ENCODE measurements at regions of chr10 and their contacts with region 1.

Region 1: GRCh38 chr10:72375585-72375984 is 20.9 kb upstream of the DNAJB12 start:
- DNase-seq: no peak
- H3K4me3 ChIP-seq: no peak overlapping the region
- H3K27ac ChIP-seq: no peak overlapping the region
- H3K27me3 ChIP-seq: no peaks in the 10 kb centered on the region
- CTCF ChIP-seq: 0 out of 2 replicates have a peak, but pooled peaks have one; percentile 3

Region 2: GRCh38 chr10:72389716-72390115 is 14.1 kb after region 1 on chr10:
- CTCF ChIA-PET with region 1: no interaction called
- POLR2A ChIA-PET with region 1: no interaction called
- DNase-seq: no peak
- H3K4me3 ChIP-seq: no peak overlapping the region
- H3K27ac ChIP-seq: no peak overlapping the region
- H3K27me3 ChIP-seq: no peaks in the 10 kb centered on the region
- CTCF ChIP-seq: no peak

Region 3: DNA sequence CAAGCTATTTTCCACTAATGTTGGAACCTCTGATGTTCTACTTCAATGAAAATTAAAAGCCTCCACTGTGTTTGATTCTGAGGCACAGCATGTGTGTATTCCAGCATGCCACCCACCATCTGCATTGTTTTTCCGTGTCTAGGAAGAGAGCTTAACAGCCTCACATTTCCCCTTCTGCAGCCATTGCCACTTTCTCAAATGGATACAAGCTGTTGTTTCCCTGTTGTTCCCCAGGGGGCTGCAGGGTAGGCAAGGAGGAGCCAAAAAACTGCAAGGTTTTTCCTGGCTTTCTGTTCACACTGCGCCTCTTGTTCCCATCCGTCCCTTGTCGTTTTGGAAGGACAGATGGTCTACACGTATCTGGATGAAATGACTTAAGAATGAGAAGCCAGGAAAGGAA is 51.4 kb after region 1 on chr10:
- CTCF ChIA-PET with region 1: interaction called, 13 read pairs
- POLR2A ChIA-PET with region 1: no interaction called
- DNase-seq: no peak
- H3K4me3 ChIP-seq: no peak overlapping the region
- H3K27ac ChIP-seq: no peak overlapping the region
- H3K27me3 ChIP-seq: no peaks in the 10 kb centered on the region
- CTCF ChIP-seq: no peak